ENCODE measurements at regions of chr4 and their contacts with region 1.

Region 1: DNA sequence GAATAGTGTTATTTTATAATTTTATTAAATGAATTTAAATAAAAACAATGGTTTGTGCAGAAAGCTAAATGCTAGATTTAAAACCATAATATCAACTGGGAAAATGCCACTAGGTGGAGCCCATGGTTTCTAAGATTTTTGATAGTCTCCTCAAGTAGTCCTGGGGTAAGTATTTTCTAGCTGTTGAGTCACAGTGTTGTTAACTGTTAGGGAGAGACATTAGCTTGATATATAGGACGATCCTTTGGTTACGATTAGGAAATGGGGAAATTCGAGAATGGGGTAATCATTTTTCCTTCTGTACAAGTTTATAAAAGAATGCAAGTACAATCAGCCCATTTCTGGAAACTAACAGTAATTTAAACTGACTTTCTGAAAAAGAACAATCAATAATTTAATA is 378.4 kb downstream of the ANKRD50 start:
- DNase-seq: no peak
- H3K4me3 Mint-ChIP-seq: no peak overlapping the region
- H3K27ac Mint-ChIP-seq: no peak overlapping the region
- H3K4me1 Mint-ChIP-seq: no peaks in the 10 kb centered on the region
- H3K27me3 Mint-ChIP-seq: no peaks in the 10 kb centered on the region

Region 2: DNA sequence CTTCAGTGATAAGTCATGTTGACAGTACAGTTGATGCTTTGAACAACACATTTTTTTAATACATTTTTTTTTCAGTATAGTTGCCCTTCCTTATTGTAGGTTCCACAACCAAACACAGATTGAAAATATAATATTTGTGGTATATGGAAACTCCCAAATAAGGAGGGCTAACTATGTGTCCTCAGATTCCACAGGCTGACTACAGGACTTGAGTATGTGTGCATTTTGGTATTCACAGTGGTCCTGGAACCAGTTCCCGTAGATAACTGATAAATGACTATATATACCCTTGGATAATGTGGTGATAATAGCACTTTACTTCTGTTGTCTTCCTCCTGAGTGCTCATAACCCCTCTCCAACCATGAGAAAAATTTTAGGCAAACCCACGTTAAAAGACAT is 1300.1 kb before region 1 on chr4:
- intact Hi-C with region 1: no loop called
- DNase-seq: no peak
- H3K4me3 Mint-ChIP-seq: no peak overlapping the region
- H3K27ac Mint-ChIP-seq: no peak overlapping the region
- H3K4me1 Mint-ChIP-seq: peaks cover 3% of the 10 kb centered on the region
- H3K27me3 Mint-ChIP-seq: no peaks in the 10 kb centered on the region

Region 3: GRCh38 chr4:125283707-125284279 is 949.7 kb after region 1 on chr4:
- intact Hi-C with region 1: loop called (anchors 5 kb)
- DNase-seq: no peak
- H3K4me3 Mint-ChIP-seq: no peak overlapping the region
- H3K27ac Mint-ChIP-seq: no peak overlapping the region
- H3K4me1 Mint-ChIP-seq: no peaks in the 10 kb centered on the region
- H3K27me3 Mint-ChIP-seq: no peaks in the 10 kb centered on the region